ENCODE measurements at regions of chr9 and their contacts with region 1.

Region 1: DNA sequence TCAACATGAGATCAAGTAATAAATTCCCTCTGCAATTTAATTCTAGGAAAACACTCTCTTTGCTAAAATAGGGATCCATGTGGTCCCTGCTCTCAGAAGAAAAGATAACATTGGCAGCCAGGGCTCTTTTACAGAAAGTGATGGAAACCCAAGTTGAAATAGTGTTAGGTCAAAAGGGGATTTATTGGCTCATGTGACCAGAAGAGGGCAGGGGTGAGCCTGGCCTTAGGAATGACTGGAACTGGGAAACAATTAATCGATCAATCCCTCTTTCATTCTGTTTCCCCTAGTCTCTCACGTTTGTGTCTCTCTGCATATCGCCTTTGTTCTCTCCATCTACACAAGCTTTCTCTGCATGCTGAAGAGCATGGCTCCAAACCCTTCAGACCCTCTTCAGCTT is 58.3 kb upstream of the ALDH1B1 start:
- DNase-seq: peak; percentile 23 to 39 (median 32)
- ATAC-seq: peak; percentile 51; the same call in 1 of the 3 replicates
- H3K4me3 ChIP-seq: no peak overlapping the region
- H3K27ac ChIP-seq: no peak overlapping the region
- H3K4me1 ChIP-seq: no peaks in the 10 kb centered on the region
- H3K27me3 ChIP-seq: peaks cover 30 to 50% of the 10 kb centered on the region in 2 experiments
- CTCF ChIP-seq: peak; percentile 51 to 67 (median 63)
- EP300 ChIP-seq: no peak
- POLR2A ChIP-seq: no peak
- RAD21 ChIP-seq: peak; percentile 30 to 62; a peak in 2 of 4 replicates

Region 2: GRCh38 chr9:38130724-38131123 is 203.5 kb before region 1 on chr9:
- CTCF ChIA-PET with region 1: no interaction called
- POLR2A ChIA-PET with region 1: no interaction called
- in situ Hi-C with region 1: no loop called
- intact Hi-C with region 1: no loop called
- DNase-seq: peak; percentile 55 to 76 (median 62)
- ATAC-seq: peak; percentile 72
- H3K4me3 ChIP-seq: no peak overlapping the region
- H3K27ac ChIP-seq: no peak overlapping the region
- H3K4me1 ChIP-seq: peaks cover 6 to 19% of the 10 kb centered on the region in 2 experiments; a peak in 3 of 5 replicates
- H3K27me3 ChIP-seq: peaks cover 37 to 60% of the 10 kb centered on the region in 2 experiments; a peak in 4 of 5 replicates
- CTCF ChIP-seq: no peak
- EP300 ChIP-seq: peak; percentile 81; the same call in 1 of the 2 replicates
- POLR2A ChIP-seq: no peak
- RAD21 ChIP-seq: no peak

Region 3: GRCh38 chr9:38251036-38251860 is 83.0 kb before region 1 on chr9:
- CTCF ChIA-PET with region 1: no interaction called
- POLR2A ChIA-PET with region 1: no interaction called
- in situ Hi-C with region 1: no loop called
- intact Hi-C with region 1: loop called (anchors 5 kb)
- DNase-seq: no peak
- ATAC-seq: no peak
- H3K4me3 ChIP-seq: no peak overlapping the region
- H3K27ac ChIP-seq: no peak overlapping the region
- H3K4me1 ChIP-seq: no peaks in the 10 kb centered on the region
- H3K27me3 ChIP-seq: peaks cover 15 to 38% of the 10 kb centered on the region in 2 experiments
- CTCF ChIP-seq: no peak
- EP300 ChIP-seq: no peak
- POLR2A ChIP-seq: no peak
- RAD21 ChIP-seq: no peak

Region 4: DNA sequence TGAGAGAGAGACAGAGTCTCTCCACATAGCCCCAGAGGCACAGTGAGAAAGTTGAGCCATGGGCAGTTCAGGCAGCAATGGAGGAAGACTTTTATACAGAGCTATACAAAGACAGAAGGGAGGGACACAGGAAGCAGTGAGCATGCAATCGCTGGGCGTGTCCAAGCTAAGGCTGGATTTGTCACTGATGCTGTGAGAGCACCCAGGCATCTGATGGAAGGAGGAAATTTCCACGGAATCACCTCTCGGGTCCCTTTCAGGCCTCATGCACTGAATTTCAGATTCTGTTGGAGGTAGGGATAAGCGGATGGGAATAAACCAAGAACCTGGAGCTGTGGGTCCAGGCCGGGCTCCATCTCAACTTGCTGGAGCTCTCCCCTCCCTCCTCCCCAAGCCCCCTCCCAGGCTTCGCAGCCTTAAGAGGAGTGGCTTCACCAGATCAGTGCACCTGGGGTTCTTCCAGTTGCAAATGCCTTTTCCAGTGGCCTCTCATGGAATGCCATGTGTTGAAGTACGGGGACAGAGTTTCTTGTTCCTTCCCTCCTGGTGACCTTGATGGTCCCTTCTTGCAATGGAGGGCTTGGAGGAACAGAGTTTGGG is 56.5 kb before region 1 on chr9:
- CTCF ChIA-PET with region 1: no interaction called
- POLR2A ChIA-PET with region 1: no interaction called
- in situ Hi-C with region 1: no loop called
- intact Hi-C with region 1: no loop called
- DNase-seq: no peak
- ATAC-seq: no peak; the same call in 2 of the 3 replicates
- H3K4me3 ChIP-seq: no peak overlapping the region
- H3K27ac ChIP-seq: no peak overlapping the region
- H3K4me1 ChIP-seq: no peaks in the 10 kb centered on the region
- H3K27me3 ChIP-seq: peaks cover 14 to 44% of the 10 kb centered on the region in 2 experiments; a peak in 4 of 5 replicates
- CTCF ChIP-seq: no peak
- EP300 ChIP-seq: no peak
- POLR2A ChIP-seq: no peak
- RAD21 ChIP-seq: no peak

Region 5: GRCh38 chr9:38401994-38402393 is 67.8 kb after region 1 on chr9:
- CTCF ChIA-PET with region 1: no interaction called
- POLR2A ChIA-PET with region 1: no interaction called
- in situ Hi-C with region 1: no loop called
- intact Hi-C with region 1: loop called (anchors 2 kb)
- DNase-seq: no peak
- ATAC-seq: no peak
- H3K4me3 ChIP-seq: no peak overlapping the region
- H3K27ac ChIP-seq: no peak overlapping the region
- H3K4me1 ChIP-seq: no peaks in the 10 kb centered on the region; a peak in 2 of 5 replicates
- H3K27me3 ChIP-seq: peaks cover 33 to 50% of the 10 kb centered on the region in 2 experiments
- CTCF ChIP-seq: no peak
- EP300 ChIP-seq: no peak
- POLR2A ChIP-seq: no peak
- RAD21 ChIP-seq: no peak

Measured in K562 (cell line).